K562 (cell line): ENCODE measurements at regions of chr2 and their contacts with region 1.

Region 1: GRCh38 chr2:26964446-26965130 is 5.8 kb upstream of the MAPRE3 start:
- DNase-seq: no peak
- ATAC-seq: no peak
- H3K4me3 ChIP-seq: no peak overlapping the region
- H3K27ac ChIP-seq: no peak overlapping the region
- H3K4me1 ChIP-seq: peaks cover 5 to 6% of the 10 kb centered on the region in 2 experiments; a peak in 3 of 5 replicates
- H3K27me3 ChIP-seq: peaks cover 5 to 16% of the 10 kb centered on the region in 2 experiments; a peak in 1 of 5 replicates
- CTCF ChIP-seq: no peak
- EP300 ChIP-seq: no peak
- POLR2A ChIP-seq: no peak
- RAD21 ChIP-seq: no peak

Region 2: DNA sequence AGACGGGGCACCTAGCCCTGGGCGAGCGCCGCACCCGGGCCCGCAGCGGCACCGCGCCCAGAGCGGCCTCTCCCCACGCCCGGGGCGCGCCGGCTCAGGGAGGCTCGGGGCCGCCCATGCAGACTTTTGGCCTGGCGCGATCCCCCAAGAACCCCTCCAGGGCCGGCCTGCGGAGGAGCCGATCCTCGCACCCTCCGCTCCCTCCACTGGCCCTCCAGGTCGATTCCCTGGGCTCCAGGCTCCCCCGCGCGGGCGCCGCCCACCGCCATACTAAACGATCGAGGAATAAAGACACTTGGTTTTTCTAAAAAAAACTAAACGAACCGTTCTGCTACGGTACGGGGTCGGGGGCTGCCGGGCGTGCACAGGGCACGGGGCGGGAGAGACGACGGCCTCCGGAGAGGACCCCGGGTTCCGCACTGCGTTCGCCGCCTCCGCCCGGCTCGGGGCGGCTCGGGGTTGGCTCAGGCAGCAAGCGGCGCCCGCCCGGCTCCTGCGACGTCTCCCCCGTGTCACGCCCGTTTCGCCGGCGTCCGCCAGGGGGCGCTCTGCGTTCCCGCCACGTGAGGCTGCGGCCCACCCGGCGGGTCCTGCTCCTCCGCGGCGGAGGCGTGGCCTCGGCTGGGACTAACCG is 121.6 kb after region 1 on chr2:
- CTCF ChIA-PET with region 1: interaction called, 22 read pairs
- POLR2A ChIA-PET with region 1: interaction called, 6 read pairs
- in situ Hi-C with region 1: loop called (anchors 5 kb)
- intact Hi-C with region 1: loop called (anchors 2 kb)
- DNase-seq: peak; percentile 96 to 97 (median 96)
- ATAC-seq: peak; percentile 90
- H3K4me3 ChIP-seq: peak overlapping the region; percentile 57
- H3K27ac ChIP-seq: peak overlapping the region; percentile 85
- H3K4me1 ChIP-seq: peaks cover 49 to 66% of the 10 kb centered on the region in 2 experiments
- H3K27me3 ChIP-seq: no peaks in the 10 kb centered on the region
- CTCF ChIP-seq: peak; percentile 62 to 89 (median 88)
- EP300 ChIP-seq: 0 out of 2 replicates have a peak, but pooled peaks have one; percentile 22
- POLR2A ChIP-seq: peak; percentile 70
- RAD21 ChIP-seq: peak; percentile 55

Region 3: DNA sequence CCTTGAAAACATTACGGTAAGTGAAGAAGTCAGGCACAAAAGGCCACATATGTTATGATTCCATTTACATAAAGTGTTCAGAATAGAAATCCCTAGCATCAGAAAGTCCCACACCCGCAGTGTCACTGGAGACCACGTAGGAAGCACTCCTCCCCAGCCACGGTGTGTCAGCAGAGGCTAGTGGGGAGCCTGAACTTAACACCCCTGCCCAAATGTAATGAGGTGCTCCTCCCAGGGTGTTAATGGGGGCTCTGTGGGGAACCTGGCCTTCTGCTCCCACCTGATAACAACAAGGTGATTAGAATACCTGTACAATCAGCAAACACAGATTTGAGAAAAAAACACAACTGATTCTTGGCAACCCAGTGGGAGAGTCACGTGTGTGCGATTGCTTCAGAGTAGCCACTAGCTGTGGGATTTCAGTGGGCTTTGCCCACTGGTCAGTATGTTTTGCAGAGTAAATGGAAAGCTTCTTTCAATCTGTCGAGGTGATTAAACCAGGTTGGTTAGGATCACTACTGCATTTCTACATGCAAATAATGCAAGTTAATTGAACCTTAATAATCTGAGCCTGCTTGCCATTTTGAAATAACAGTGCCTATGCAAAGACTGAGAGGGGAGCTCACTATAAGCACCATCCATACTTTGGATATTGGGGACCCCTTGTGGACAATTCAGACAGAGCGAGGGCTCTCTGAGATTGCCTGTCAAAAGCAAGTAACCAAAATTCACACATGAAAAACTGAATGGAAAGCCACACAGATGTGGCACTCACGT is 226.7 kb after region 1 on chr2:
- CTCF ChIA-PET with region 1: interaction called, 4 read pairs
- POLR2A ChIA-PET with region 1: no interaction called
- in situ Hi-C with region 1: no loop called
- intact Hi-C with region 1: loop called (anchors 5 kb)
- DNase-seq: peak; percentile 54 to 79 (median 62)
- ATAC-seq: peak; percentile 98
- H3K4me3 ChIP-seq: no peak overlapping the region
- H3K27ac ChIP-seq: no peak overlapping the region
- H3K4me1 ChIP-seq: no peaks in the 10 kb centered on the region; a peak in 2 of 5 replicates
- H3K27me3 ChIP-seq: no peaks in the 10 kb centered on the region
- CTCF ChIP-seq: peak; percentile 79 to 93 (median 82)
- EP300 ChIP-seq: no peak
- POLR2A ChIP-seq: no peak
- RAD21 ChIP-seq: peak; percentile 91

Region 4: GRCh38 chr2:27735263-27735953 is 770.8 kb after region 1 on chr2:
- CTCF ChIA-PET with region 1: no interaction called
- POLR2A ChIA-PET with region 1: no interaction called
- in situ Hi-C with region 1: no loop called
- intact Hi-C with region 1: no loop called
- DNase-seq: peak; percentile 59 to 75 (median 68)
- ATAC-seq: peak; percentile 80
- H3K4me3 ChIP-seq: peak overlapping the region; percentile 19; the same call in 1 of the 2 replicates
- H3K27ac ChIP-seq: no peak overlapping the region
- H3K4me1 ChIP-seq: peaks cover 7 to 10% of the 10 kb centered on the region in 2 experiments; a peak in 3 of 5 replicates
- H3K27me3 ChIP-seq: peaks cover 5 to 25% of the 10 kb centered on the region in 2 experiments; a peak in 3 of 5 replicates
- CTCF ChIP-seq: no peak
- EP300 ChIP-seq: no peak
- POLR2A ChIP-seq: no peak
- RAD21 ChIP-seq: no peak